A673 (cell line): ENCODE measurements at regions of chr11 and their contacts with region 1.

Region 1: GRCh38 chr11:12893787-12894672 is 115.1 kb upstream of the RASSF10 start:
- DNase-seq: peak; percentile 73
- H3K4me3 ChIP-seq: no peak overlapping the region
- H3K27ac ChIP-seq: no peak overlapping the region
- H3K4me1 ChIP-seq: peaks cover 10% of the 10 kb centered on the region
- H3K27me3 ChIP-seq: no peaks in the 10 kb centered on the region
- CTCF ChIP-seq: peak; percentile 82

Region 2: DNA sequence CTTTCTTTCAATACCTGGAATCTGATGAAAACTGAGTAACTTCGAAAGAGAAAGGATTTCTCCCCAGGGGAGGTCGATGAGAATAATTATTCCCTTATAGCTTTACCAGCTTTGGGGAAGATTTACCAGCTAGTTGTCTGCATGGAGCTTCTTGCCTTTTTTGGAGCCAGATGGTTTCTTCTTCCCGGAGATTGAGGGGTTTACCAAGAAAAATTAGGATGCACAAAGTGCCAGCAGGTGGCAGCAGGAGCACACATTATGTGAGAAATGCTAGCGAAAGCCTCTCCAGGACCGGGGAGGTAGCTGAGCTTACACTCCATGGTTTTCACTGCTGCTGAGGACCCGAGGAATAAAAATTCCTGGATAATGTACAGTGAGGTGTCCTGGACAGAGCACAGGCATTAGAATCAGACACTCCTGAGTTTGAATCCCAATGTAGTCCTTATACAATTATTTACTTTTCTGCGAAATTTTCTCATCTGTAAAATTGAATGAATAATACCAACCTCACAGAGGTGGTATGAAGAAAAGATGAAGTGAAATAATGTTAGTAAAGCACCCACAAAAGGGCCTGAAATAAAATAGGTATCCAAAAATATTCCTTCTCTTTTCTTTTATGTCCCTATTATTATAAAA is 562.7 kb before region 1 on chr11:
- CTCF ChIA-PET with region 1: interaction called, 19 read pairs
- POLR2A ChIA-PET with region 1: no interaction called
- intact Hi-C with region 1: loop called (anchors 2 kb)
- DNase-seq: peak; percentile 93
- H3K4me3 ChIP-seq: no peak overlapping the region
- H3K27ac ChIP-seq: no peak overlapping the region
- H3K4me1 ChIP-seq: peaks cover 18% of the 10 kb centered on the region
- H3K27me3 ChIP-seq: no peaks in the 10 kb centered on the region
- CTCF ChIP-seq: peak; percentile 74

Region 3: GRCh38 chr11:12411806-12412727 is 482.0 kb before region 1 on chr11:
- CTCF ChIA-PET with region 1: interaction called, 3 read pairs
- POLR2A ChIA-PET with region 1: no interaction called
- intact Hi-C with region 1: loop called (anchors 2 kb)
- DNase-seq: peak; percentile 89
- H3K4me3 ChIP-seq: no peak overlapping the region
- H3K27ac ChIP-seq: peak overlapping the region; percentile 73
- H3K4me1 ChIP-seq: peaks cover 49% of the 10 kb centered on the region
- H3K27me3 ChIP-seq: no peaks in the 10 kb centered on the region
- CTCF ChIP-seq: peak; percentile 79

Region 4: GRCh38 chr11:12581923-12582322 is 312.1 kb before region 1 on chr11:
- CTCF ChIA-PET with region 1: no interaction called
- POLR2A ChIA-PET with region 1: interaction called, 12 read pairs
- intact Hi-C with region 1: no loop called
- DNase-seq: peak; percentile 47
- H3K4me3 ChIP-seq: no peak overlapping the region
- H3K27ac ChIP-seq: no peak overlapping the region
- H3K4me1 ChIP-seq: no peaks in the 10 kb centered on the region
- H3K27me3 ChIP-seq: no peaks in the 10 kb centered on the region
- CTCF ChIP-seq: no peak

Region 5: GRCh38 chr11:12599408-12600143 is 294.5 kb before region 1 on chr11:
- CTCF ChIA-PET with region 1: interaction called, 12 read pairs
- POLR2A ChIA-PET with region 1: no interaction called
- intact Hi-C with region 1: loop called (anchors 2 kb)
- DNase-seq: peak; percentile 69
- H3K4me3 ChIP-seq: no peak overlapping the region
- H3K27ac ChIP-seq: peak overlapping the region; percentile 77
- H3K4me1 ChIP-seq: peaks cover 47% of the 10 kb centered on the region
- H3K27me3 ChIP-seq: no peaks in the 10 kb centered on the region
- CTCF ChIP-seq: peak; percentile 91

Region 6: DNA sequence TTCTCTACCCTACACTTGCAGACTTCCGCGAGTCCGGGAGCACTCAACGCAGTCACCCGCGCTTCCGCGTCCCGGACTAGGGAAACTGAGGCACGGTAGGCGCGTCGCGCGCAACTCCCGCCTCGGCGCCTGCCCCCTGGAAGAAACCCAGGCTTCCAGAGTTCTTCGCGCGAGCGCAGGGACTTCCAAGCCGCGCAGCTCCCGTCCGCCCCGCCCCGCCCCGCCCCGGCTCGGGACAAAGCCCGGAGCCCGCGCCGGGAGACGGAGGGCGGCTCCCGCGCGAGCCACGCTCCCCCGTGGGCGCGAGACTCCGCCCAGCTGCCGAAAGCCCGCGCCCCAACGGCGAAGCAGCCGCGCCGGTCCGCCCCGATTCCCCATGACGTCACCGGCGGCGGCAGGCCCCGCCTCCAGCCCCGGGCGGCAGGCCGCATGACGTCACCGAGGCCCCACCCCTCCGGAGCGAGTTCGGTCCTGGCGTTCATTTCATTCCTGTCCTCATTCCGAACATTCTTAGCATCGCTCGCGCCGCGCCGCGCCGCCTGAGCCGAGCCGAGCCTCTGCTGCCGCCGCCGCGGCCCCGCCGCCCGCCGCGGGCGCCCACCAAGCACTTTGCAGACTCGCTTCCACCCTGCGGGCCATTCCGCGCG is 220.0 kb before region 1 on chr11 and contains the start of gene TEAD1:
- CTCF ChIA-PET with region 1: no interaction called
- POLR2A ChIA-PET with region 1: no interaction called
- intact Hi-C with region 1: loop called (anchors 5 kb)
- DNase-seq: peak; percentile 94
- H3K4me3 ChIP-seq: peak within 1 kb of the TSS; percentile 85
- H3K27ac ChIP-seq: peak within 1 kb of the TSS; percentile 90
- H3K4me1 ChIP-seq: peaks cover 23% of the 10 kb centered on the region
- H3K27me3 ChIP-seq: no peaks in the 10 kb centered on the region
- CTCF ChIP-seq: no peak
- total RNA-seq, gene TEAD1: 74.6 and 81.8 TPM in 2 replicates